Motor neuron (in vitro differentiated cells): ENCODE measurements at regions of chr2 and their contacts with region 1.

Region 1: DNA sequence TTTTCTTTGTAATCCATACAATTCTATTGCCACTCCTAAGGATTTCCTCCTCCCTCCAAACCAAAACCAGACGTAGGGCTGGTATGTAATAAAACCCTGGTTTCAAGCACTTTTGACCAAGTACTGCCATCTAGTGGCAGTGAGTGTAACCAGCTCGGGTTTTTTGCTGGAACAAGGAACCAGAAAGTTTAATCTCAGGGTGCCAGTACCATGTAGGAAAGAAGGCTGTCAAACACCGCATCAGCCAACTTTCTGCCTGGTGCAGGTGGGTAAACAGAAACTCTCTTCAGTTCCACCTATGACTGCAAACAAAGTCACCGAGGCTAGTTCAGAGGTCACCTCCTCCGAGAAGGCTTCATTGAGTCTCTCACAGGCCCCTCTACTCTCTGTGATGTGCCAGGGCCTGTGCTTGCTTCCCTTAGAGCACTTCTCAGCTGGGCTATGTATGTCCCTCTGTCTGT is 10.2 kb upstream of the THNSL2 start:
- ATAC-seq: peak in 7 of 8 experiments; percentile 46 to 93 (median 61)
- H3K4me3 ChIP-seq: no peak overlapping the region
- H3K27ac ChIP-seq: no peak overlapping the region
- H3K4me1 ChIP-seq: no peaks in the 10 kb centered on the region

Region 2: GRCh38 chr2:88055371-88056128 is 104.4 kb before region 1 on chr2 and contains the start of gene KRCC1:
- in situ Hi-C with region 1: loop called in 2 of 9 experiments (anchors 10 to 25 kb)
- ATAC-seq: peak; percentile 82 to 97 (median 96)
- H3K4me3 ChIP-seq: peak within 1 kb of the TSS; percentile 69 to 92 (median 86)
- H3K27ac ChIP-seq: peak within 1 kb of the TSS; percentile 92 to 94
- H3K4me1 ChIP-seq: peaks cover 13 to 19% of the 10 kb centered on the region in 2 donors
- total RNA-seq, gene KRCC1: 11.6 to 27.6 (median 18.3) TPM

Region 3: DNA sequence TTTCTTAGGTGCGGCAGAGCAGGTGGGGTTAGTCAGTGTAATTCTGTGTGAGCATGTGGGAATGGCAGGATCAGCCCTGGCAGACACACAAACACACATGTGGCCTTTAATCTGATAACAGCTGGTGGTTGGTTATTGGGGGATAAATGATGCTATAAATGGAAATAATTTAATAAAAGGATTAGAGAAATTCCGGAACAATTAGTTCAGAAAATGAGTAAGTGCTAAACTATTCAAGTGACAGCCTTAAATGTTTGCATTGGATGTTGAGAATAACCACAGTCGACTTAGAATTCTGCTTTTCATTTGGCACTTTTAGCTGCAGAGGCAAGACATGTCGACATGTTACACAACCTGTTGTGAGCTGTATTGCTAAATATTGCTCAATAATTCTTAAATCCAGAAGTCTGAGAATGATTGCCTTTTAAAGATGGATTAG is 85.1 kb before region 1 on chr2:
- in situ Hi-C with region 1: loop called in 2 of 9 experiments (anchors 10 to 25 kb)
- ATAC-seq: peak in 1 of 8 experiments; percentile 32
- H3K4me3 ChIP-seq: no peak overlapping the region
- H3K27ac ChIP-seq: no peak overlapping the region
- H3K4me1 ChIP-seq: no peaks in the 10 kb centered on the region

Region 4: GRCh38 chr2:88627056-88627855 is 467.3 kb after region 1 on chr2 and contains the start of gene EIF2AK3:
- in situ Hi-C with region 1: no loop called
- ATAC-seq: peak; percentile 75 to 90 (median 86)
- H3K4me3 ChIP-seq: peak within 1 kb of the TSS; percentile 79 to 97 (median 80)
- H3K27ac ChIP-seq: peak within 1 kb of the TSS; percentile 97 to 98
- H3K4me1 ChIP-seq: peaks cover 12% of the 10 kb centered on the region in 2 donors
- total RNA-seq, gene EIF2AK3: 17.7 to 39.8 (median 25.0) TPM